ENCODE measurements at regions of chr14 and their contacts with region 1.

Region 1: GRCh38 chr14:50860478-50861086 is 11.3 kb upstream of the ABHD12B start:
- DNase-seq: peak; percentile 93
- ATAC-seq: peak; percentile 67
- H3K4me3 Mint-ChIP-seq: peak overlapping the region; percentile 84
- H3K27ac Mint-ChIP-seq: peak overlapping the region; percentile 88
- H3K4me1 Mint-ChIP-seq: peaks cover 18% of the 10 kb centered on the region
- H3K27me3 Mint-ChIP-seq: peaks cover 14% of the 10 kb centered on the region

Region 2: GRCh38 chr14:50321009-50321660 is 539.4 kb before region 1 on chr14:
- CTCF ChIA-PET with region 1: interaction called, 11 read pairs
- POLR2A ChIA-PET with region 1: no interaction called
- DNase-seq: peak; percentile 83
- ATAC-seq: peak; percentile 97
- H3K4me3 Mint-ChIP-seq: no peak overlapping the region
- H3K27ac Mint-ChIP-seq: no peak overlapping the region
- H3K4me1 Mint-ChIP-seq: peaks cover 9% of the 10 kb centered on the region
- H3K27me3 Mint-ChIP-seq: no peaks in the 10 kb centered on the region

Region 3: DNA sequence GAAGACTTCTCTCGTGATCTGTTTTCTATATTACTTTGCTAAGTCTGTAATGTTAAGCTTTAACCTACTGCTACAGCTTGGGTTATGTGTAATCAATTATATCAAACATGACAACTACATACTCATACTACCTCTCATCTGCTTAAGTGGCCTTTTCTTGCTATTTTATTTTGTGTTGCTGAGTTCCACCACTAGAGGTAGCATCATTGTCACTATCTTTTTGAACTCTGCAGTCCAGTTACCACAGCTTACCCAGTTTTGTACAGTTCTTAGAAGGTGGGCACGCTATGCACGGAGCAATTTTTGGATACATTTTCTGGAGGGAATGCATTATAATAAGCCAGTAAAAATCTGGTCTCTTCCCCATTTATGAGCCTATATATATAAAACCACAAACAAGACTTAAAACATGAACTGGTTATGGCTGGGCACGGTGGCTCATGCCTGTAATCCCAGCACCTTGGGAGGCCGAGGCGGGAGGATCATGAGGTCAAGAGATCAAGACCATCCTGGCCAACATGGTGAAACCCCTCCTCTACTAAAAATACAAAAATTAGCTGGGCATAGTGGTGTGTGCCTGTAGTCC is 240.9 kb before region 1 on chr14:
- CTCF ChIA-PET with region 1: interaction called, 20 read pairs
- POLR2A ChIA-PET with region 1: no interaction called
- DNase-seq: no peak
- ATAC-seq: no peak
- H3K4me3 Mint-ChIP-seq: no peak overlapping the region
- H3K27ac Mint-ChIP-seq: no peak overlapping the region
- H3K4me1 Mint-ChIP-seq: no peaks in the 10 kb centered on the region
- H3K27me3 Mint-ChIP-seq: no peaks in the 10 kb centered on the region

Region 4: GRCh38 chr14:50762001-50762930 is 98.3 kb before region 1 on chr14:
- CTCF ChIA-PET with region 1: interaction called, 17 read pairs
- POLR2A ChIA-PET with region 1: no interaction called
- DNase-seq: no peak
- ATAC-seq: no peak
- H3K4me3 Mint-ChIP-seq: no peak overlapping the region
- H3K27ac Mint-ChIP-seq: peak overlapping the region; percentile 6
- H3K4me1 Mint-ChIP-seq: no peaks in the 10 kb centered on the region
- H3K27me3 Mint-ChIP-seq: no peaks in the 10 kb centered on the region

Region 5: DNA sequence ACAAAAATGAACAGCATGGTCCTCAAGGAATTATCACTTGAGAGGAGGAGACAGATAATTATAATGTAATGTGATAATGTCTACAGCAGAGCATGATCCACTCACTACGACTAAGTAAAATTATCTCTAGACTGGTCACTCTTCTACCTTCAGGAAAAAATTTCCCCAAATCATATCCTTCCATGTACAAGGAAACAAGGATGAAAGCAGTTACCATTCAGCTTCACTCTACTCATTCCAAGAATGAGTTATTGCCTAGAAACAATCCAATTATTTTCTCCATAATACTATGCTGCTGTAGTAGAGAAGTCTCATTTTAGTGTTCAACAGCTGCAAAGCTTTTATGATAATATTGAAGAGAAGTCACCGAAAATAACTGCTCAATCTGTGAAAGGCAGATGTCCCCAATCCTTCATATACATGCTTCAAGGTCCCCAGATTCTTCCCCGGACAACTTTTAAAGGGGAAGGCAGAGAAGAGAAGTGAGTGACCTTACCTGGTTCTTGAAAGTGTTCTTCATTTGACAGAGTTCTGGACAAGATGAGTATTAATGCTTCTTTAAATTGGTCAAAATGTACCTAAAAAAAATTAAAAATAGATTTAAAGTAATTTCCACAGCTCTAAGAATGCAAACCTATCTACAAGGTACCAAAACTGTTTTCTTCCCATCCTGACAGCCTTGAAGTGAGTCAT is 54.2 kb before region 1 on chr14:
- CTCF ChIA-PET with region 1: interaction called, 25 read pairs
- POLR2A ChIA-PET with region 1: no interaction called
- DNase-seq: no peak
- ATAC-seq: no peak
- H3K4me3 Mint-ChIP-seq: no peak overlapping the region
- H3K27ac Mint-ChIP-seq: no peak overlapping the region
- H3K4me1 Mint-ChIP-seq: peaks cover 12% of the 10 kb centered on the region
- H3K27me3 Mint-ChIP-seq: no peaks in the 10 kb centered on the region

Region 6: GRCh38 chr14:50830932-50831725 is 29.5 kb before region 1 on chr14 and contains the start of gene NIN:
- CTCF ChIA-PET with region 1: interaction called, 204 read pairs
- POLR2A ChIA-PET with region 1: interaction called, 40 read pairs
- DNase-seq: peak; percentile 78
- ATAC-seq: peak; percentile 90
- H3K4me3 Mint-ChIP-seq: peak within 1 kb of the TSS; percentile 92
- H3K27ac Mint-ChIP-seq: peak within 1 kb of the TSS; percentile 94
- H3K4me1 Mint-ChIP-seq: peaks cover 67% of the 10 kb centered on the region
- H3K27me3 Mint-ChIP-seq: no peaks in the 10 kb centered on the region
- total RNA-seq, gene NIN: 104 TPM

Region 7: GRCh38 chr14:50875359-50876070 is 14.9 kb after region 1 on chr14:
- CTCF ChIA-PET with region 1: interaction called, 14 read pairs
- POLR2A ChIA-PET with region 1: interaction called, 5 read pairs
- DNase-seq: peak; percentile 87
- ATAC-seq: peak; percentile 97
- H3K4me3 Mint-ChIP-seq: peak overlapping the region; percentile 27
- H3K27ac Mint-ChIP-seq: no peak overlapping the region
- H3K4me1 Mint-ChIP-seq: peaks cover 34% of the 10 kb centered on the region
- H3K27me3 Mint-ChIP-seq: peaks cover 76% of the 10 kb centered on the region

Region 8: DNA sequence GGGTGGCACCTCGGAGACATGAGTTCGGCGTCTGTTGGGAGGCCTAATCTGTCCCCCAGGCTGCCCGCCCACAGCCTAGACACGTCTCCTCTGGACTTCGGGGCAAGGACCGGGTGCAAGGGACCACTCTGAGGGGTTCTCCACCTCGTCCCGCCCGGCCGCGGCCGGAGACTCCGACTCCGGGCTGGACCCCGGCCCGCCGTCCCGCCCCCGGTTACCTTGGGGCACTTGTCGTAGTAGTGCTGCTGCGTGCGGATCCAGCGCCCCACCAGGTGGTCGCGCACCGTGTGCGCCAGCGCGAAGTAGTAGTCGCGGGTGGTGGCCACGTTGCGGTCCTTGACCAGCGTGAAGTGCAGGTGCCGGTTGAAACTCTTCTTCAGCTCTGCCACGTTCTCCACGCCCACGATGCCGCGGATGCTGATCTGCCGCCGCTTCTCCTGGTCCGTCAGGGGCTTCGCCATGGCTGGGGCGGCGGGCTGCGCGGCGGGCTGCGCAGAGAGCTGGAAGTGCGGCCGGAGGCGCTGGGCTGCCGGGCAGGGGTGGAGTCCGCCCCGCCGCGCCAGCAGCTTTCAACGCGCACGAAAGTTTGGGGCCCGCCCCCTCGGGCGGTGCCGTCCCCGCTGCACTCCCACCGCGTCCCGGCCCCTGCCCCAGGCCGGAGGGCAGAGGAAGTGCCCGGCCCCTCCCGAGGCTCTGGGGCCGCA is 83.5 kb after region 1 on chr14 and contains the start of gene PYGL:
- CTCF ChIA-PET with region 1: no interaction called
- POLR2A ChIA-PET with region 1: no interaction called
- DNase-seq: peak; percentile 34
- ATAC-seq: peak; percentile 87
- H3K4me3 Mint-ChIP-seq: peak within 1 kb of the TSS; percentile 75
- H3K27ac Mint-ChIP-seq: peak within 1 kb of the TSS; percentile 30
- H3K4me1 Mint-ChIP-seq: peaks cover 12% of the 10 kb centered on the region
- H3K27me3 Mint-ChIP-seq: peaks cover 40% of the 10 kb centered on the region
- total RNA-seq, gene PYGL: not detected

Region 9: GRCh38 chr14:51056421-51056820 is 195.8 kb after region 1 on chr14:
- CTCF ChIA-PET with region 1: no interaction called
- POLR2A ChIA-PET with region 1: no interaction called
- DNase-seq: no peak
- ATAC-seq: no peak
- H3K4me3 Mint-ChIP-seq: no peak overlapping the region
- H3K27ac Mint-ChIP-seq: no peak overlapping the region
- H3K4me1 Mint-ChIP-seq: no peaks in the 10 kb centered on the region
- H3K27me3 Mint-ChIP-seq: no peaks in the 10 kb centered on the region